ENCODE measurements at regions of chr17 and their contacts with region 1.

Region 1: DNA sequence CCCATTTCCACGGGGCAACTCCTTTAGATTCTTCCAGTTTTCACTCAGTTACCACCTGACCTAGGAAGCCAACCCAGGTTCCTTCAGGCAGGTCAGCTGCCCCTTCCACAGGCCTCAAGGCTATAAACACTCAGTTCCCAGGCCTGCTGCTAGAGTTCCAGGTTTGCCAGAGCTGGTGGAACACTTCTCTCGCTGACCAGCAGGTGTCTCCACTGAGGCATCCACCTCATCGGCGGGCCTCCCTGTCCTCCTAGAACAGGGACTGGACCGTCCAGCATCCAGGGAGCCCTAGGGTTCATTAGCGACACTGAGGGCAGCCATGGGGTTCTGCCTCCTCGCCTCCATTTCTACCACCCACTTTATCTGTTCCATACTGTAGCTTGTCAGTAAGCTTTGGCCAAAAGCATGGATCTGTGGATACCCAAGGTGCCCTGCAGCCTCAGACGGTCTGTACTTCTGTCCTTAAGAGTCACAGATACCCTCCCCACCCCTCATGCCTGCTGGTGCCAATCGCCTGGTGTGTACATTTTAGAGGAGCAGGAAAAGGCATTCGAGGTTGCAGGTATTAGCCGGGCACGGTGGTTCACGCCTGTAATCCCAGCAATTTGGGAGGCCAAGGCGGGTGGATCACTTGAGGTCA is 29.0 kb downstream of the PIMREG start:
- DNase-seq: peak; percentile 92
- H3K4me3 ChIP-seq: peak overlapping the region in 1 of 2 experiments; percentile 33; a peak in 1 of 4 replicates
- H3K27ac ChIP-seq: no peak overlapping the region
- H3K4me1 ChIP-seq: peaks cover 0 to 5% of the 10 kb centered on the region in 2 experiments; a peak in 3 of 4 replicates
- H3K27me3 ChIP-seq: no peaks in the 10 kb centered on the region
- CTCF ChIP-seq: peak; percentile 92
- EP300 ChIP-seq: no peak
- RAD21 ChIP-seq: peak; percentile 76

Region 2: DNA sequence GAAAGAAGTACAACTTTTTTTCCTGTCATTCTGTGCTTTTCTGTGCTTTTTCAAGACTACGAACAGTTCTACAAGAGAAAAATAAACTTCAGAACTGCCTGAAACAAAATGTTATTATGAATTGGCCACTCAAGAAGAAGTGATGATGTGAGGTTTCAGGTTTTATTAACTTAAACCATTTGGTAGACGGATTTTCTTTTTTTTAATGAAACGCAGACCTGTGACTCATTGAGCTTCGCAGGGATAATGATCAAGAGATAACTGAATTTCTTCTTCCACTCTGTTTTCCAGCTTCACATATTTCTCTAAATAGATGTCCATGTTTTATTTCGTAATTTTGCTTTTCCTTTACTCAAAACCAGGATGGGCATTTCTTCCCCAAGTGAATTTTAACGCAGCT is 71.0 kb before region 1 on chr17:
- CTCF ChIA-PET with region 1: no interaction called
- POLR2A ChIA-PET with region 1: no interaction called
- DNase-seq: no peak
- H3K4me3 ChIP-seq: no peak overlapping the region
- H3K27ac ChIP-seq: no peak overlapping the region
- H3K4me1 ChIP-seq: no peaks in the 10 kb centered on the region
- H3K27me3 ChIP-seq: peaks cover 38% of the 10 kb centered on the region
- CTCF ChIP-seq: no peak
- EP300 ChIP-seq: 0 out of 4 replicates have a peak, but pooled peaks of 1 of the 2 experiments have one; percentile 34
- RAD21 ChIP-seq: no peak

Region 3: GRCh38 chr17:6443692-6444569 is 29.3 kb before region 1 on chr17 and contains the start of gene PIMREG:
- CTCF ChIA-PET with region 1: interaction called, 13 read pairs
- POLR2A ChIA-PET with region 1: no interaction called
- DNase-seq: peak; percentile 98
- H3K4me3 ChIP-seq: peak within 1 kb of the TSS; percentile 60 to 75
- H3K27ac ChIP-seq: peak within 1 kb of the TSS; percentile 82 to 86
- H3K4me1 ChIP-seq: peaks cover 0 to 11% of the 10 kb centered on the region in 2 experiments; a peak in 1 of 4 replicates
- H3K27me3 ChIP-seq: no peaks in the 10 kb centered on the region
- CTCF ChIP-seq: no peak
- EP300 ChIP-seq: no peak
- RAD21 ChIP-seq: no peak
- polyA plus RNA-seq, gene PIMREG: 17.2 and 19.6 TPM in 2 replicates

Region 4: DNA sequence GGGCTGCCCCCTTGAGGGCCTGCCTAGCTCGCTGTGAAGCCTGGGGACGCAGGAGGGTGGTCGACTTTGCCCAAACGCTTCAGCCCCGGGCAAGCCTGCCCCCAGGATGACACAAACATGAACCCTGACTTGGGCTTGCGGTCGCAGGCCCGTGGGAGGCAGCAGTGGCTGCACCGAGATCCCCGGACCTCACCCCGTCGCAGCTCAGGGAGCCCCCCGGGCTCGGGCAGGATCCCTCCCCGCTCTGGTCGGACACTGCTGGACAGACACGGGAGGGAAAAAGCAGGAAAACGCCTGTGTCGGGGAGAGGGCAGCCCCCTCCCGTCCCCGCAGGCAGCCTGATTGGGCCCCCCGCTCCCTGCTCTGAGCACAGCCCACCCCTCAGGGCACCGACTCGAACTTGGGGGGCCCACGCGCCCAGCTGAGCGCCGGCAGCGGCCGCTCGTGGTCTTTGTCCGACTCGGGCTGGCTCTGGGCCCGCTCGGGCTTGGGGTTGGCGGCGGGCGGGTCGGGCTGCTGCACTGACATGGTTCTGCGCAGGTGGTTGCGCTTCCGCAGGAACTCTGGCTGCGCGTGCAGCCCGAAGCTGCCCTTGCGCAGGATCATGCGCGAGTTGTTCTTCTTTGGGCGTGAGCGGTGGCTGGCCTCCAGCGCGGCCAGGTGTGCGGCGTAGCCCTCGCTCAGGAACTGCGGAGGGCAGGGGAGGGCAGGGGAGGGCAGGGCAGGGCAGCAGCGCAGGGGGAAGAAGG is 18.1 kb before region 1 on chr17:
- CTCF ChIA-PET with region 1: interaction called, 12 read pairs
- POLR2A ChIA-PET with region 1: no interaction called
- DNase-seq: peak; percentile 74
- H3K4me3 ChIP-seq: no peak overlapping the region; a peak in 1 of 4 replicates
- H3K27ac ChIP-seq: no peak overlapping the region
- H3K4me1 ChIP-seq: peaks cover 3 to 17% of the 10 kb centered on the region in 2 experiments; a peak in 2 of 4 replicates
- H3K27me3 ChIP-seq: no peaks in the 10 kb centered on the region
- CTCF ChIP-seq: no peak
- EP300 ChIP-seq: no peak
- RAD21 ChIP-seq: no peak

Region 5: DNA sequence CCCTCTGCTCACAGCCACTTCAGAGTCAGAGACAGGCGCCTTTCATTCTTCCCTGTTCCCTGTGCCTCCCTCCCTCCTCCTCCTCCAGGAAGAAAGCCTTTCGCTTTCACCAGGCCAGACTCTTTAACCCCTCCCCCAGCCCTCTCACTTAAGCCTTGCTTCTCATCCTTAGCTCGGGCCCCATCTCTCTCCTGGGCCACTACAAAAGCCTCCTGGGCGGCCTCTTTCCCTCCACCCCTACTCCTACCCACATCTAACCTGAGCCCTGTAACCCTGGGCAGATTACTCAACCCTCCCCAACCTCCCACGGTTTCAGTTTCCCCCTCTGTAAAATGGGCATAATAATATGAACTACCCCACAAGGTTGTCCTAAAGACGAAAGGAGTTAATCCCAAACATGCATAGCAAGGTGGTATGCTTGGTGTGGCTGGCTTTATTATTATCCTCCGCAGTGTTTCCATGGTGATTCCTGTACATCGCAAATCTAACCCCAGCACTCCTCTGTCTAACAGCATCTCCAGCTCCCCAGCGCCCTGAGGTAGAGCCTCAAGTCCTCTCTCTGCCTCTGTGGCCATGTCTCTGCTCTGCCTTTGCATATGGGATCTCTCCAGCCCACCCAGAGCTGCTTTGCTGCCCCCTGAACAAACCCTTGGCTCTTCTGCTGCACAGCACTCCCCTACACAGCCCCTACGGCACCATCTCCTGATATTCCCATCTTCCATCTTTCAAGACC is 11.3 kb before region 1 on chr17:
- CTCF ChIA-PET with region 1: interaction called, 14 read pairs
- POLR2A ChIA-PET with region 1: no interaction called
- DNase-seq: no peak
- H3K4me3 ChIP-seq: no peak overlapping the region
- H3K27ac ChIP-seq: no peak overlapping the region
- H3K4me1 ChIP-seq: peaks cover 3% of the 10 kb centered on the region in 2 experiments; a peak in 2 of 4 replicates
- H3K27me3 ChIP-seq: no peaks in the 10 kb centered on the region
- CTCF ChIP-seq: no peak
- EP300 ChIP-seq: no peak
- RAD21 ChIP-seq: no peak

Region 6: GRCh38 chr17:6483507-6483906 is 10.3 kb after region 1 on chr17:
- CTCF ChIA-PET with region 1: interaction called, 17 read pairs
- POLR2A ChIA-PET with region 1: no interaction called
- DNase-seq: no peak
- H3K4me3 ChIP-seq: no peak overlapping the region
- H3K27ac ChIP-seq: no peak overlapping the region
- H3K4me1 ChIP-seq: peaks cover 0 to 25% of the 10 kb centered on the region in 2 experiments; a peak in 1 of 4 replicates
- H3K27me3 ChIP-seq: no peaks in the 10 kb centered on the region
- CTCF ChIP-seq: no peak
- EP300 ChIP-seq: no peak
- RAD21 ChIP-seq: no peak

Region 7: GRCh38 chr17:6491071-6491700 is 17.9 kb after region 1 on chr17:
- CTCF ChIA-PET with region 1: interaction called, 17 read pairs
- POLR2A ChIA-PET with region 1: no interaction called
- DNase-seq: no peak
- H3K4me3 ChIP-seq: no peak overlapping the region
- H3K27ac ChIP-seq: no peak overlapping the region
- H3K4me1 ChIP-seq: peaks cover 0 to 9% of the 10 kb centered on the region in 2 experiments; a peak in 2 of 4 replicates
- H3K27me3 ChIP-seq: no peaks in the 10 kb centered on the region
- CTCF ChIP-seq: no peak
- EP300 ChIP-seq: no peak
- RAD21 ChIP-seq: no peak

Region 8: DNA sequence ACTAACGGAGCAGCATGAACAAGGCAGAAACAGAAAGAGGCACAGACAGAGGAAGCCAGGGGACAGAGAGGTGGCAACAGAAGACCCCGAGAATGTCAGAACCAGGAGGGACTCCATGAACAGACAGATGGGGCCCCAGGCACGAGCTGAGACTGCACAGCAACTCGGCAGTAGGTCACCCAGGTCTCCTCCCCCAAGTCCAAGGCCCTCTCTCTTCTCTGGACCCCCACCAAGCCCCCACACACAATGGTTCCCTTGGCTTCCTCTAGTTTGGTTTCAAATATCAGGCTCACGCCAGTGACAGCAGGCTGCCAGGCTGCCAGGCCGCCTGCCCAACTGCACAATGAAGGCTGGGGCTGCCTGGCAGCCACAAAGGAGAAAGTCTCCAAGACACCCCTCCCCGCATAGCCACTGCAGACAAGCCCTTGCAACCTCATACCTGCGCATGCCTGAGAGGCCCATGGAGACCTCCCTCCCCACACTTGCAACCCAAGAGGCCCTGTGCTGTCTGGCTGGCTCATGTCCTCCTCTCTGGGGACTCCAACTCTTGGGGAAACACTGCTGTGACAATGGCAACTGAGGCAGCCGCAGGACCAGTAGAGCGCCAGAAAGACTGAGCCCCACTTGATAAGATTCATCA is 25.8 kb after region 1 on chr17:
- CTCF ChIA-PET with region 1: interaction called, 10 read pairs
- POLR2A ChIA-PET with region 1: no interaction called
- DNase-seq: no peak
- H3K4me3 ChIP-seq: no peak overlapping the region
- H3K27ac ChIP-seq: no peak overlapping the region
- H3K4me1 ChIP-seq: peaks cover 5 to 6% of the 10 kb centered on the region in 2 experiments; a peak in 2 of 4 replicates
- H3K27me3 ChIP-seq: no peaks in the 10 kb centered on the region
- CTCF ChIP-seq: no peak
- EP300 ChIP-seq: no peak
- RAD21 ChIP-seq: no peak